Testis (tissue), 5 donors: ENCODE measurements at regions of chr1 and their contacts with region 1.

Region 1: DNA sequence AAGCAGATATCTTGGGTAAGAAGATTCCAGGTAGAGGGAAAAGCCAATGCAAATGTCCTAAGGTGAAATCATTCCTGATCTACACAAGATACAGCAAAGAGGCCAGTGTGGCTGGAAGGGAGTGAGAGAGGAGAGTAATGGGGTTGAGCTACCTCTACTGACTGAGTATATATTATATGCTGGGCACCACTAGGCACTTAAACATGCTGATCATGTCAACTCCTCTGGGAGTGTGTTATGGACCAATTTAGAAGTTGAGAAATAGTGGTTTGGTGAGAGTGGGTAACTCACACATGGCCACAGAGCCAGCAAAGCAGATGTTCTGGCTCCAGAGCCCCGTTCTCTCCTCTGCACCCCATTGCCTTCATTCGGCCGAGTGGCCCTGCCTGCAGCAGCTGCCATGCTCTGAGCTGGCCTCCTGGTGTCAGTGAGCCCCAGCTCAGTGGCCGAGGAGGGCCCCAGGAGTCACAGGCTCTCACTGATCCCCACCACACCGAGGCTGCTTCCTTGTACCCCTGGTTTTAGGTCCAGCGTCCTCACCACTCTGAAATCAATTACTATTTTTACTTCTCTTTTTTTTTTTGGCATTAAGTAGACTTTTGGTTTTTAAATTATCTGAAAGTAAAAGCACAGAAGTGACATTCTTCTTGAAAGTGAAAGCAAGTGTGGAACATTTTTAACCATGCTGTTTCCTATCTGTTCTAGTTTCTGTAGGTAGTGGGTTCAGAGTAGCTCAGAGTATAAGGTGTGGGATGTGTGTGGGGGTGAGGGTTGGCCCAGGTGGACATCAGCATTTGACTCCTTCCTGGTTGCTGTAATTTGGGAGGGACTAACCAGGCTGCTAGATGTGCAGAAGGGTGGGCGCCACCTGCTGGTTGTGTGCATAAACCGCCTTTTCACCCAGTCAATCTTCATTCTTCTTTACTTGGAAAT is 45.8 kb upstream of the CRNN start:
- DNase-seq: peak; percentile 82
- H3K4me3 ChIP-seq: no peak overlapping the region
- H3K27ac ChIP-seq: no peak overlapping the region
- H3K4me1 ChIP-seq: no peaks in the 10 kb centered on the region
- H3K27me3 ChIP-seq: no peaks in the 10 kb centered on the region
- CTCF ChIP-seq: peak; percentile 27 to 75 (median 60)
- POLR2A ChIP-seq: no peak

Region 2: GRCh38 chr1:152189657-152190442 is 270.0 kb before region 1 on chr1:
- intact Hi-C with region 1: loop called (anchors 10 kb)
- DNase-seq: peak; percentile 82
- H3K4me3 ChIP-seq: peak overlapping the region; percentile 53 to 83
- H3K27ac ChIP-seq: peak overlapping the region in 1 of 2 donors; percentile 73
- H3K4me1 ChIP-seq: no peaks in the 10 kb centered on the region
- H3K27me3 ChIP-seq: no peaks in the 10 kb centered on the region
- CTCF ChIP-seq: peak; percentile 48 to 75 (median 73)
- POLR2A ChIP-seq: no peak